Activated T-helper 1 cell treated with anti-CD3 and anti-CD28 coated beads, Interleukin-12 subunit alpha, Interleukin-12 subunit beta, Interleukin-2, Interleukin-4 antibody, amounts not matched to agents 30 ng/mL and 10 ng/mL and 1 ng/mL, durations not matched to agents 14 hours and 24 hours and 36 hours (primary cell): ENCODE measurements at regions of chr1 and their contacts with region 1.

Region 1: DNA sequence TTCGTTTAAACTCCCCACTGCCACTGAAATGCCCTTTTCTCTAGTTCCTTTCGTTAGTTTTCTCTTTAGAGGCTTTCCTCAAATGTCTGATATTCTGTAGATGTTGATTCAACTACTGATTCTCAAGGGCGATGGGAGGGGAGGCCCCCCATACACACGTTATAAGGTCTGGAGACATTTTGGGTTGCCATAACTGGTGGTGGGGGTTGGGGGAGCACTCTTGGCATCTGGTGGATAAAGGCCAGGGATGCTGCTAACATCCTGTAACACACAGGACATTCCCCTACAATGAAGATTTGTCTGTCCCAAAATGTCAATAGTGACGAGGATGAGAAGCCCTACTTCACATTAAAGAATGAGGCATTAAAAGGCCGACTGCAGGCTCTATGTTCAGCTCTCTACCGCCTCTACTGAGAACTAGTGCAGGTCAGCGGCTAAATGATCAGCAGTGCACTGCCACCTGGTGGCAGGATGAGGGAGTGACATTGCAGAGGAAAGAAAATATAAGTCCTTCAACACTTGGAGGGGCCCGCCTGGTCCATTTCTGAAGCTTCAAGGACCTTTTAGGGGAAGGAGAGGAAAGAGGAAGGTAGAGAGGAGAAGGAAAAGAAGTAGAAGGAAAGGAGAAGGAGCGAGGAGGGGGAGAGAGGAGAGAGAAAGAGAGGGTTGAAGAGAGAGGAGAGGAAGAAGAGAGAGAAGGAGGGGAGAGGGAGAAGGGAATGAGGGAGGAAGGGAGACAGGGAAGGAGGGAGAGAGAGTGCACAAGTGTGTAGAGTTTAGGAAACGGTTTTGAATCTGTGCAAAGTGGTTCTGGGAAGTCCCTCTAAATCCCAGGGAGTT is 29.4 kb downstream of the ALG14 start:
- DNase-seq: peak; percentile 69
- H3K4me3 Mint-ChIP-seq: no peak overlapping the region
- H3K27ac Mint-ChIP-seq: no peak overlapping the region
- H3K4me1 Mint-ChIP-seq: no peaks in the 10 kb centered on the region
- H3K27me3 Mint-ChIP-seq: no peaks in the 10 kb centered on the region

Region 2: DNA sequence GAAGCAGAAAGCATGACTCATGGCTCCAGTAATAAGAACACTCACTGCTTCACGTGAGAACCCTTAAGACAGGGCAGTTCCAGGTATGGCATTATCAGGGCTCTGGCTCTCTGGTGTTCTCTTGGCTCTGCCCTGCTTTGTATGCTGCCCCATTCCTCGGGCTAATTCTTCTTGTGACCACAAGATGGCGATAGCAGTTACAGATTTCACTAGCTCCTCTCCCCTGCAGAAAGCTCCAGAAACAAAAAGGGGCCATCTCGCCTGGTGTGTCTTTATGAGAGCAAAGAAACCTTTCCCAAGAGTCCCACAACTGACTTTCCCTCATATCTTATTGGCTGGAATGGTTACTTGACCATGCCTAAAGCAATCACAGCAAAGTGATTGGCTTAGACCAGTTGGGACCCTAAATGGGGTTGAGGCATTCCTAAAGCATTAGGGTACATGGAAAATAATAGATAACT is 561.9 kb before region 1 on chr1:
- intact Hi-C with region 1: loop called (anchors 1 kb)
- DNase-seq: peak; percentile 11
- H3K4me3 Mint-ChIP-seq: no peak overlapping the region
- H3K27ac Mint-ChIP-seq: no peak overlapping the region
- H3K4me1 Mint-ChIP-seq: peaks cover under 1% of the 10 kb centered on the region
- H3K27me3 Mint-ChIP-seq: no peaks in the 10 kb centered on the region

Region 3: DNA sequence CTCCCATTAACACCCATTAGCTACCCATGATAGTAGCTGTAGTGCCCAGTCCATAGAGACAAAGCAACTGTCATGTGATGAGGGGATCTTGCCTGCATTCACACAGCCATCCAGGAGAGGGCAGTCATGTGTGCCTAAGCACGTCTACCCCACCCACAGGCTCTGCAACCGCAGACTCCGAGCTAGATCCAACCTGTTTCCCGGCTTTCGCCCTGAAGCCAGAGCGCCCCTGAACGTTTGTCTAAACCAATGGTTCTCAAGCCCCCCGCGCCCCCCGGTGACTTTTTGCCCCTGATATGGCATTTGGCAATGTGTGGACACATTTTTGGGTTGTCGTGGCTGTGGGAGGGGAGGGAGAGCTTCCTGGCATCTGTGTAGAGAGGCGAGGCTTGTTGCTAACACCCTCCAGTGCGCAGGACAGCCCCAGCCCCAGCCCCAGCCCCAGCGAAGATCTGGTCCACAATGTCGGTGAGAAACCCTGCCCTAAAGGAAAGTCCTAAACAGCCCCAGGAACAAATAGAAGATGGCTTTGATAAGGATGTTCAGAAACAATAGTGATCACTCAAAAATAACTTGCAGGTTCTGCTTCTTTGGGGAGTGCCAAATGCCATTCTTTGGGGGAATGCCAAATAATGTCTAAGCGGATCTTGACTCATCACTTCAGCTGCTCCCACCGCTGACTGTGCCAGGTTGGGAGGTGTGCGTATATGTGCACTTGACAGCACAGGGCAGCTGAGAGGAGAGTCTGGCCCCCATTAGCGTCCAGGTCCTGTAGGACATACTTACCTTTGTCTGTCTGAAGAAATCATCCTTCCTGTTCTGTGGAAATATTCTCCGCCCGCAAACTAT is 188.7 kb before region 1 on chr1:
- intact Hi-C with region 1: loop called (anchors 1 kb)
- DNase-seq: peak; percentile 73
- H3K4me3 Mint-ChIP-seq: no peak overlapping the region
- H3K27ac Mint-ChIP-seq: no peak overlapping the region
- H3K4me1 Mint-ChIP-seq: no peaks in the 10 kb centered on the region
- H3K27me3 Mint-ChIP-seq: peaks cover 2% of the 10 kb centered on the region

Region 4: GRCh38 chr1:94903280-94904009 is 139.9 kb before region 1 on chr1:
- intact Hi-C with region 1: no loop called
- DNase-seq: no peak
- H3K4me3 Mint-ChIP-seq: no peak overlapping the region
- H3K27ac Mint-ChIP-seq: no peak overlapping the region
- H3K4me1 Mint-ChIP-seq: no peaks in the 10 kb centered on the region
- H3K27me3 Mint-ChIP-seq: peaks cover 2% of the 10 kb centered on the region

Region 5: GRCh38 chr1:94962409-94963265 is 80.7 kb before region 1 on chr1:
- intact Hi-C with region 1: loop called (anchors 10 kb)
- DNase-seq: peak; percentile 19
- H3K4me3 Mint-ChIP-seq: peak overlapping the region; percentile 89
- H3K27ac Mint-ChIP-seq: peak overlapping the region; percentile 92
- H3K4me1 Mint-ChIP-seq: peaks cover 5% of the 10 kb centered on the region
- H3K27me3 Mint-ChIP-seq: no peaks in the 10 kb centered on the region

Region 6: GRCh38 chr1:95002540-95003432 is 40.6 kb before region 1 on chr1:
- intact Hi-C with region 1: no loop called
- DNase-seq: no peak
- H3K4me3 Mint-ChIP-seq: no peak overlapping the region
- H3K27ac Mint-ChIP-seq: no peak overlapping the region
- H3K4me1 Mint-ChIP-seq: no peaks in the 10 kb centered on the region
- H3K27me3 Mint-ChIP-seq: peaks cover 1% of the 10 kb centered on the region

Region 7: DNA sequence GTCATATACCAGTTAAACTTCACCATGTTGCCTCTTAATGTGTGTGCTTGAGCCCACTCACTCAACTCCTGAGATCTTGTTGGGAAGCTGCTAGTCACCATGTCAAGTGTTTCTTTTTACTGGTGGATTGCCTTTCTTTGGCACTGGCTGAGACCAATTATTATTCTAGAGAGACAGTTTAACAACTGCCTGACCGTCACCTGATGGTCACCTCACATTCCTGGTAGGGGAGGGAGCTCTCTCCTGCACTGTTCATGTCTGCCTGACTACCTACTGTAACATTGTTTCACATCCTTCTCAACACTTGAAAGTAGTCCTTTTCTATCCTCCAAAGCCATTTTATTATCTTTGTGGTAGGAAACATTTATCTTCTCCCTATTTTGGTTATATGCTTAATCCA is 362.9 kb after region 1 on chr1:
- intact Hi-C with region 1: no loop called
- DNase-seq: no peak
- H3K4me3 Mint-ChIP-seq: no peak overlapping the region
- H3K27ac Mint-ChIP-seq: no peak overlapping the region
- H3K4me1 Mint-ChIP-seq: no peaks in the 10 kb centered on the region
- H3K27me3 Mint-ChIP-seq: no peaks in the 10 kb centered on the region